ENCODE measurements at regions of chr16 and their contacts with region 1.

Region 1: DNA sequence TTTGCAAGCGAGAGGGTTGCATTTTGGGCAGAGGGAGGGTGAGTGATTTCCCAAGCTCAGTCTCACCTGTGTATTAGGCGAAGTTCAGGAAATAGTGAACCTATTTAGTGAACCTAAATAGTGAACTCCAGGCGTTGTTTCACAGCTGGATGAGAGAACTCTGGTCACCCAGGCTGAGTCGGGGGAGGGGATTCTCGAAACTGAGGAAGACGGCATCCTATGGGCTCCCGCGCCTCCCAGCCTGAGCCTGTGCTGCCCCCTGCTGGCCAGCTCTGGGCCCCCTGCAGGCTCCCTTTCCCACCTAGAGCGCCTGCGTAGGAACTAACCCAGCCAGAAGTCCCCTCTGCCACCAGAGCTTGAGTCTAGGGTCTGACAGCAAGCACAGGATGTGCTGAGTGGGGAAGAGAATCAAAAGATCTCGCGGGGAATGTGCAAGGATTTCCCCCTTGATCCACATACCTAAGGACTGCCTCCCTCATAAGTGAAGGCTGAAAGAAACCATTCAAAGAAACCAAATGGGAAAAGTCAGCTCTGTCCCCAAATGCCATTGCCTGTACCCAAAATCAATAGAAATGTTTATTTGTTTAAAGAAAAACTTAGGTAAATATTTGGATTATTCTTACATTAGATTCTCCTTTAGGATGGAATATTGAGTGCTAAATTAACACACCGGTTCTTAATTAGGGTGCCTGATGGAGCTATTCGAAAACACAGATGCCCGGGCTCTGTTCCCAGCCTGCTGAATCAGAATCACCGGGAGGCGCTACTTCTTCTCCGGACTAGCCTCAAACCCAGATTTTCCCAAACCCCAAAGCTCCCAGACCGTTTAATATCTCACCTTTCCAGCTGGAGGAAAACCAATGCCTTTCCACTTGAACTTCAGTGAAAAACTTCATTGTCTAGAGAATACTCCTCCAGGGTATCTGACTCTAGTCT is 14.8 kb upstream of the MARVELD3 start:
- DNase-seq: peak; percentile 83
- ATAC-seq: peak; percentile 87
- H3K4me3 Mint-ChIP-seq: peak overlapping the region; percentile 26
- H3K27ac Mint-ChIP-seq: no peak overlapping the region
- H3K4me1 Mint-ChIP-seq: peaks cover 9% of the 10 kb centered on the region
- H3K27me3 Mint-ChIP-seq: peaks cover 31% of the 10 kb centered on the region

Region 2: DNA sequence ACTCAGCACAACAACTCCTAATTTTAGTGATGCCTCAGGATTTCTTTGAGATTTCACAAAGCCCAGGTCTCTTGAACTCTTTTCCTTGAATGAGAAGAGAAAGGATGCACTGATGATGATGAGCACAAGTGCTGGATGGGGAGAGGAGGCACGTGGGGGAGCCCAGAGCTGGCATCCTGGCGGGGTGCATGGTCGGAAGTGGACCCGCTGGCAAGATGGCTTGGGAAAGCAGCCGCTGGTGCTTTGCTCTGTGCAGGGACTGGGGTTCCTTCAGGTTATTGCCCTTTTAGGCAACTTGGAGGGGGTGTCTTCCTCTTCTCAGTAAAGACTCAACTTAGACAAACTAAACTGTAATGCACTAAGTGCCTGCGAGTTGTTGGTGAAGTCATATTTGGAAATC is 230.4 kb before region 1 on chr16:
- CTCF ChIA-PET with region 1: no interaction called
- DNase-seq: no peak
- ATAC-seq: no peak
- H3K4me3 Mint-ChIP-seq: no peak overlapping the region
- H3K27ac Mint-ChIP-seq: no peak overlapping the region
- H3K4me1 Mint-ChIP-seq: no peaks in the 10 kb centered on the region
- H3K27me3 Mint-ChIP-seq: no peaks in the 10 kb centered on the region

Region 3: GRCh38 chr16:71499775-71500364 is 111.3 kb before region 1 on chr16:
- CTCF ChIA-PET with region 1: interaction called, 18 read pairs
- DNase-seq: peak; percentile 61
- ATAC-seq: peak; percentile 65
- H3K4me3 Mint-ChIP-seq: no peak overlapping the region
- H3K27ac Mint-ChIP-seq: no peak overlapping the region
- H3K4me1 Mint-ChIP-seq: no peaks in the 10 kb centered on the region
- H3K27me3 Mint-ChIP-seq: no peaks in the 10 kb centered on the region

Region 4: DNA sequence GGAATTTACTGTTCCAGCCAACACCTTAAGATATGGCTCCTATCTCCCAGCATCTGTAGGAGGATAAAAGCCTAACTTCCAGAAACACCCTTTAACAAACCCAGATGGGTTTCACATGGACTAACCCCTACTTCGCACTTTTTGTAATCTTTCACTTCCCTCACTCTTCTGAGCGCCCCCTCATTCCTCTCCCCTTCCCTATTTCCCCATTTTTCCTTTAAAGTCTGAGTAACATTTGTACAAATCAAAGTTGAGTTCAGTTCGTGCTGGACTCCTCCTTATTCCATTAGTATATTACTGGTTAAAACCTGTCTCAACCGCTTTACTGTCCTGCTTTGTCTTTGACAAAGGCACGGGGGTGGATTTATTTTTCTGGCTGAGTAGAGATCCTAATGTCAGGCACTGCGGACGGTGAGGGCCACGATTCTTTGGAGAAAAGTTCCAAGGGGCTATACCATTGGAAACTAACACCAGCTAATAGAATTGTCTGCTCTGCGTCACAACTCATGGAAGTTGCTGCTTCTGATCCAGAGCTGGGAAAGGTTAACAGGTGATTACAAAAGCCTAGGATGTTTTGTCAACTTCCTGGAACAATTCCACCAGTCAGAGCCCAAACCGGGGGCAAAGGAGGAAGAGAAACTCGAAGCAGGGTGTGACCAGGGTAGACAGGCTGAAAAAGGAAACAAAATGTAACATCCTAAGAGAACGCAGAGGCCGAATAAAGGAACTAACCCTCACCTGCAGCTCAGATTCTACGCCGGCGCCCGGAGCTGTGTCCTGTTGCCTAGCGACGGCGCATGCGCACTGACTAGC is 46.8 kb before region 1 on chr16:
- CTCF ChIA-PET with region 1: interaction called, 91 read pairs
- DNase-seq: no peak
- ATAC-seq: no peak
- H3K4me3 Mint-ChIP-seq: peak overlapping the region; percentile 79
- H3K27ac Mint-ChIP-seq: peak overlapping the region; percentile 93
- H3K4me1 Mint-ChIP-seq: peaks cover 18% of the 10 kb centered on the region
- H3K27me3 Mint-ChIP-seq: peaks cover 10% of the 10 kb centered on the region

Region 5: GRCh38 chr16:71622088-71622487 is 10.9 kb after region 1 on chr16:
- CTCF ChIA-PET with region 1: interaction called, 20 read pairs
- DNase-seq: peak; percentile 75
- ATAC-seq: peak; percentile 70
- H3K4me3 Mint-ChIP-seq: peak overlapping the region; percentile 4
- H3K27ac Mint-ChIP-seq: peak overlapping the region; percentile 47
- H3K4me1 Mint-ChIP-seq: peaks cover 6% of the 10 kb centered on the region
- H3K27me3 Mint-ChIP-seq: peaks cover 34% of the 10 kb centered on the region

Region 6: DNA sequence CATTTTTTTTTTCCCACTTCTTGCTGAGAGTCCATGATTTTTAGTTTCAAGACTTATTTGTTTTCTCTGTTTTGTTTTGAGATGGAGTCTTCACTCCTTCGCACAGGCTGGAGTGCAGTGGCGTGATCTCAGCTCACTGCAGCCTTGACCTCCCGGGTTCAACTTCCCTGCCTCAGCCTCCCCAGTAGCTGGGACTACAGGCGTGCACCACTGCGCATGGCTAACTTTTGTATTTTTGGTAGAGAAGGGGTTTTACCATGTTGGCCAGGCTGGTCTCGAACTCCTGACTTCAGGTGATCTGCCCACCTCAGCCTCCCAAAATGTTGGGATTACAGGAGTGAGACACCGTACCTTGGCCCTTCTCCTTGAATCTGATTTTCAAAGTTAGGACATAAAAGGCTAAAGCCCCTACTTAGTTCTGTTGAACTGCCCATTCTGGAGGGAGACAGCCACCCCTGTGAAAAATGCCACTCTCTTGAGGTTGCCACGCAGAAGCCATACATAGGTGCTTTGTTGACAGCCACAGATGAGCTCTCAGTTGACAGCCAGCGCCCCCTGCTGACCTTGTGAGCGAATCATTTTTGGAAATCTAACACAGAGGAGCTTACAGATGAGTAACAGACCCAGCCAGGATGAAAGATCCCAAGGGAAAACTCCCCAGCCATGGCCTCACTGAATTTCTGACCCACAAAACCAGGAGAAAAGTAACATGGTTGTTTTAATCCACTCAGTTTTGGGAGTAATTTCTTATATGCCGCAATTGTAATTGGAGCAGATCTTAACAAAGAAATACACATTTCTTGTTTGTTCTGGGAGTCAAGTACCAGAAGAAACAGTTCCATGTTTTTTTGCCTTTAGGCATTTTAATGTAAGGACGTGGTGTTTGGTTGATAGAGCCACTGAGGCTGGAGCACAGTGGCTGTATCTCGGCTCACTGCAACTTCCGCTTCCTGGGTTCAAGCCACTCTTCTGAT is 350.1 kb after region 1 on chr16:
- CTCF ChIA-PET with region 1: interaction called, 16 read pairs
- DNase-seq: peak; percentile 88
- ATAC-seq: peak; percentile 93
- H3K4me3 Mint-ChIP-seq: no peak overlapping the region
- H3K27ac Mint-ChIP-seq: no peak overlapping the region
- H3K4me1 Mint-ChIP-seq: peaks cover 17% of the 10 kb centered on the region
- H3K27me3 Mint-ChIP-seq: peaks cover 15% of the 10 kb centered on the region

Measured in activated CD8-positive, alpha-beta memory T cell treated with anti-CD3 and anti-CD28 coated beads, Interleukin-2, amount 10 ng/mL, durations not matched to agents 7 days and 5 days (primary cell).